ENCODE measurements at regions of chr22 and their contacts with region 1.

Region 1: GRCh38 chr22:22884010-22884887 is 3.4 kb upstream of the IGLL5 start:
- DNase-seq: peak; percentile 83
- ATAC-seq: peak; percentile 72
- H3K4me3 Mint-ChIP-seq: no peak overlapping the region
- H3K27ac Mint-ChIP-seq: no peak overlapping the region
- H3K4me1 Mint-ChIP-seq: peaks cover 18% of the 10 kb centered on the region
- H3K27me3 Mint-ChIP-seq: peaks cover 15% of the 10 kb centered on the region
- CTCF ChIP-seq: peak; percentile 78

Region 2: GRCh38 chr22:22743128-22743760 is 141.0 kb before region 1 on chr22:
- CTCF ChIA-PET with region 1: interaction called, 38 read pairs
- POLR2A ChIA-PET with region 1: no interaction called
- intact Hi-C with region 1: no loop called
- DNase-seq: no peak
- ATAC-seq: no peak
- H3K4me3 Mint-ChIP-seq: no peak overlapping the region
- H3K27ac Mint-ChIP-seq: no peak overlapping the region
- H3K4me1 Mint-ChIP-seq: peaks cover 13% of the 10 kb centered on the region
- H3K27me3 Mint-ChIP-seq: peaks cover 7% of the 10 kb centered on the region
- CTCF ChIP-seq: no peak

Region 3: DNA sequence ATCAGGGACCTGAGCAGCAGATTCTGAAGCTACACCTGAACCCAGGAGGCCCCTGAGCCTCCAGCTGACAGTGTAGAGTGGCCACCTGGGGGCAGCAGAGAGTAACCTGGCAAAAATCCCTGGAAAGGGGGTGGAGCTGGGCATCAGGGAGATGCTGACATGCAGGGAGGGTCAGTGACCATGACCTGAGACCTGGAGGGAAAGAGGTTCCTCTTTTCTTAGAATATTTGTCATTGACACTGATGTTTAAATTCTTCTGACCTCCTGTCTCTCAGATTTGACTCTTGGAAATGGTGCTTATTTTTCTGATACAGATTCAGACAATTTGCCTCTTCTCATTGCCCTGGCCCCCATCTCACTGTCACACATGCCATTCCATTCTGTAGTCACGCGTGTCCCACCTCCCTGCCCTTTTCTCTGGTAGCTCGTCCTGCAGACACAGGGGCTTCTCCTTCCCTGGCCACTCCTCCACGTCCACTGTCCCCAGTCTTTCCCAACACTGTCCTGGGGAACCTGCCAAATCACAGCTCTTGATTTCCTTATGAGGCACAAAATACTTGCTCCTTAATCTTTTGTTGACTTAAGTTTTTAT is 113.9 kb before region 1 on chr22:
- CTCF ChIA-PET with region 1: interaction called, 35 read pairs
- POLR2A ChIA-PET with region 1: no interaction called
- intact Hi-C with region 1: no loop called
- DNase-seq: peak; percentile 65
- ATAC-seq: peak; percentile 62
- H3K4me3 Mint-ChIP-seq: no peak overlapping the region
- H3K27ac Mint-ChIP-seq: no peak overlapping the region
- H3K4me1 Mint-ChIP-seq: peaks cover 4% of the 10 kb centered on the region
- H3K27me3 Mint-ChIP-seq: no peaks in the 10 kb centered on the region
- CTCF ChIP-seq: peak; percentile 80

Region 4: GRCh38 chr22:22810018-22810427 is 74.2 kb before region 1 on chr22:
- CTCF ChIA-PET with region 1: interaction called, 59 read pairs
- POLR2A ChIA-PET with region 1: no interaction called
- intact Hi-C with region 1: no loop called
- DNase-seq: peak; percentile 72
- ATAC-seq: peak; percentile 78
- H3K4me3 Mint-ChIP-seq: no peak overlapping the region
- H3K27ac Mint-ChIP-seq: no peak overlapping the region
- H3K4me1 Mint-ChIP-seq: peaks cover 25% of the 10 kb centered on the region
- H3K27me3 Mint-ChIP-seq: no peaks in the 10 kb centered on the region
- CTCF ChIP-seq: peak; percentile 72

Region 5: GRCh38 chr22:22836635-22837034 is 47.6 kb before region 1 on chr22:
- CTCF ChIA-PET with region 1: interaction called, 14 read pairs
- POLR2A ChIA-PET with region 1: interaction called, 3 read pairs
- intact Hi-C with region 1: no loop called
- DNase-seq: no peak
- ATAC-seq: no peak
- H3K4me3 Mint-ChIP-seq: no peak overlapping the region
- H3K27ac Mint-ChIP-seq: no peak overlapping the region
- H3K4me1 Mint-ChIP-seq: peaks cover 21% of the 10 kb centered on the region
- H3K27me3 Mint-ChIP-seq: no peaks in the 10 kb centered on the region
- CTCF ChIP-seq: no peak

Region 6: GRCh38 chr22:22865311-22866072 is 18.8 kb before region 1 on chr22:
- CTCF ChIA-PET with region 1: interaction called, 16 read pairs
- POLR2A ChIA-PET with region 1: interaction called, 4 read pairs
- intact Hi-C with region 1: no loop called
- DNase-seq: peak; percentile 77
- ATAC-seq: peak; percentile 82
- H3K4me3 Mint-ChIP-seq: no peak overlapping the region
- H3K27ac Mint-ChIP-seq: peak overlapping the region; percentile 35
- H3K4me1 Mint-ChIP-seq: peaks cover 41% of the 10 kb centered on the region
- H3K27me3 Mint-ChIP-seq: no peaks in the 10 kb centered on the region
- CTCF ChIP-seq: no peak

Region 7: GRCh38 chr22:22935546-22936157 is 51.4 kb after region 1 on chr22:
- CTCF ChIA-PET with region 1: interaction called, 5 read pairs
- POLR2A ChIA-PET with region 1: no interaction called
- intact Hi-C with region 1: loop called (anchors 5 kb)
- DNase-seq: peak; percentile 59
- ATAC-seq: peak; percentile 76
- H3K4me3 Mint-ChIP-seq: no peak overlapping the region
- H3K27ac Mint-ChIP-seq: no peak overlapping the region
- H3K4me1 Mint-ChIP-seq: peaks cover 8% of the 10 kb centered on the region
- H3K27me3 Mint-ChIP-seq: no peaks in the 10 kb centered on the region
- CTCF ChIP-seq: no peak

Region 8: DNA sequence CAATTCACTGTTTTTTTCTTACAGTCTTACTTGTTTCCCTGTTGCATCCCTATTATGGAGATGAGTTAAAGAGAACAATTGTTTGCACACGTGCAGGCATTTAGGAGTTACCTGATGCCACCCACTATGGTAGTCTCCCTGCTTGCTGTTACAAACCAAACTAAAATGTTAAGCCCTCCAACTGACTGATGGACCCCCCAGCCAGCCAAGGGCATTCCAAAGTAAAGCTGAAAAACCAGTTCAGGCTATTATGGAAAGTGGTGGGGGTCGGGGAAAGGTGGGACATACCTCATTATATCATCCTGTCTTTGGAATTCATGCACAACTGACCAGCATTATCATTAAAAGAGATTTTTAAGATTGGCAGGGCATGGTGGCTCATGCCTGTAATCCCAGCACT is 139.0 kb after region 1 on chr22:
- CTCF ChIA-PET with region 1: no interaction called
- POLR2A ChIA-PET with region 1: no interaction called
- intact Hi-C with region 1: no loop called
- DNase-seq: no peak
- ATAC-seq: no peak
- H3K4me3 Mint-ChIP-seq: no peak overlapping the region
- H3K27ac Mint-ChIP-seq: no peak overlapping the region
- H3K4me1 Mint-ChIP-seq: no peaks in the 10 kb centered on the region
- H3K27me3 Mint-ChIP-seq: peaks cover 2% of the 10 kb centered on the region
- CTCF ChIP-seq: no peak

Region 9: DNA sequence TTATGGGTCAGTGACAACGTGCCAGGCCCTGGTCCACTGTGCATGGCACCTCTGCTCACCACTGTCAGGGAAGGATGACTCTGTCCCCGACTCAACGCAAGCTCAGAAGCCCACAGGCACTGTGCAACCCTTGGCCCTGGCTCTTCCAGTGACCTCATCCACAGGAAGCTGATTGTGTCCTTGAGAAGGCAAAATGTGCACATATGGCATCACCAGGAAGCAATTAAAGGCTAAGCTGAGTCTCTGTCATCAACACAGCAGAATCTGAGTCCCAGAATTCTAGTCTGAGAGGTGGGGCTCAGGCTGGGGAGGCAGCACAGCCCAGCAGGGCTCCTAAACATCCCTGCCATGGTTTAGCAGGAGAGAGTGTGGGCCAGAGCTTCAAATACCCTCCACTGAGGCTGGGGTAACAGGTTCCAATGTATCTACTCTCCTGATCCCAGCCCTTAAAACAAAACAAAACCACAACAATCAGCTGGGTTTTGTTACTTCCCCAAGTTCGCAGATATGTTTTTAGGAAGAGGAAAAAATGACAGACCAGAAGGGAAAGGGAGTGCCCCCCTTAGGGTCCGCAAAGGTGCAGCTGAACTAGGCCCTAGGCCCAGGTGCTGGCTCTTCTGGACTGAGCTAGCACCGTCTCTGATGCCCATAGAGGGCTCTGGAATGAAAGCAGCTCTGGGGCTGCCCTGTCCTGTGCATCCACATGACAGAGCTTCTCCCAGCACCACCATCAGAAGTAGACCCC is 152.6 kb after region 1 on chr22:
- CTCF ChIA-PET with region 1: no interaction called
- POLR2A ChIA-PET with region 1: no interaction called
- intact Hi-C with region 1: no loop called
- DNase-seq: peak; percentile 23
- ATAC-seq: peak; percentile 67
- H3K4me3 Mint-ChIP-seq: no peak overlapping the region
- H3K27ac Mint-ChIP-seq: peak overlapping the region; percentile 27
- H3K4me1 Mint-ChIP-seq: peaks cover 10% of the 10 kb centered on the region
- H3K27me3 Mint-ChIP-seq: peaks cover 6% of the 10 kb centered on the region
- CTCF ChIP-seq: no peak